ENCODE measurements at regions of chrX and their contacts with region 1.

Region 1: DNA sequence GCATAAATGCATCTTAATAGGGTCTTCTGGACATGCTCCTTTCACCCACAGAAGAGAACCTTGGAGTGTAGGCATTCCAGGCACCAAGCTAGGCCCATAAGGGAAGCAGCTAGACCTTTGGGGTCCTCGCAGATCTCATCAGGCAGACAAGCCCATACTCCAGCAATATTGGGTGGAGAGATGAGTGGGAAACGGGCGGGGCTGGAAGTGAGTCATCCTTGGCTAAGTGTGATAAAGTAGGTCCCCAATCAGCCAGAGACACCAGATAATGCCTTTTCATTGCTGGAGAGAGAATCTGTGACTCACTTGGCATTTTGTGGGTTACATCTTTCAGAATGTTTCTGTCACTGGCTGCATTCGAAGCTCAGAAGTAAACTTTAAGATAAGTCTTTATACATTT is 133.3 kb upstream of the MBNL3 start:
- DNase-seq: peak; percentile 9
- H3K4me3 Mint-ChIP-seq: no peak overlapping the region
- H3K27ac Mint-ChIP-seq: peak overlapping the region; percentile 82
- H3K4me1 Mint-ChIP-seq: peaks cover 12% of the 10 kb centered on the region
- H3K27me3 Mint-ChIP-seq: no peaks in the 10 kb centered on the region

Region 2: DNA sequence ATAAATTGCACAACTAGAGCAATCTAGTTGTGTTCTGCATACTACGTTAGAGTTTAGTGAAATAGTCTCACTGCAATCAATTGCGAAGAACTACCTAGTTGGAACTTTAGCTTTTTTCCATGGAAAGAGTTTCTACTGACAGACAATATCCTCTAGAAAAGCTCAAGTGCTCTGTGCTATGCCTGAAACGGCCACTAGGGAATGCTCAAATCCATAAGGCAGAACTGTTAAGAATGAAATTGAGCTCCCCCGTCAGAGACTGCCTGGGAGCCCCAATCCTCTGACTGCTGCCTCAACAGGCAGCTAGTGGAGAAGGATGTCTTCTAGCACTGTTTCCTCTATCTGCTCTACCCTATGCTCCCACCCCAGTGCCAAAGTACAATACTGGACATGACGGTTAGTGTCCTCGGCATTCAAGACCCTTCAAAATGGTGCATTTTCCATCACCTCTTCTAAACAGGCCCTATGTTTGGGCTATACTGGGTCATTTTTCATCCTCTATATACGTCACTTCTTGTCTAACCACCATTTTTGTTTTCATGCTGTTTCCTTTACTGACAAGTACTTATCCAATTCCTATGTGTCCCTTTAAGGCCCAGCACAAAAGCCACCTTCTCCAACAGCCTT is 529.6 kb before region 1 on chrX:
- intact Hi-C with region 1: loop called (anchors 10 kb)
- DNase-seq: peak; percentile 14
- H3K4me3 Mint-ChIP-seq: no peak overlapping the region
- H3K27ac Mint-ChIP-seq: no peak overlapping the region
- H3K4me1 Mint-ChIP-seq: peaks cover 11% of the 10 kb centered on the region
- H3K27me3 Mint-ChIP-seq: no peaks in the 10 kb centered on the region

Region 3: DNA sequence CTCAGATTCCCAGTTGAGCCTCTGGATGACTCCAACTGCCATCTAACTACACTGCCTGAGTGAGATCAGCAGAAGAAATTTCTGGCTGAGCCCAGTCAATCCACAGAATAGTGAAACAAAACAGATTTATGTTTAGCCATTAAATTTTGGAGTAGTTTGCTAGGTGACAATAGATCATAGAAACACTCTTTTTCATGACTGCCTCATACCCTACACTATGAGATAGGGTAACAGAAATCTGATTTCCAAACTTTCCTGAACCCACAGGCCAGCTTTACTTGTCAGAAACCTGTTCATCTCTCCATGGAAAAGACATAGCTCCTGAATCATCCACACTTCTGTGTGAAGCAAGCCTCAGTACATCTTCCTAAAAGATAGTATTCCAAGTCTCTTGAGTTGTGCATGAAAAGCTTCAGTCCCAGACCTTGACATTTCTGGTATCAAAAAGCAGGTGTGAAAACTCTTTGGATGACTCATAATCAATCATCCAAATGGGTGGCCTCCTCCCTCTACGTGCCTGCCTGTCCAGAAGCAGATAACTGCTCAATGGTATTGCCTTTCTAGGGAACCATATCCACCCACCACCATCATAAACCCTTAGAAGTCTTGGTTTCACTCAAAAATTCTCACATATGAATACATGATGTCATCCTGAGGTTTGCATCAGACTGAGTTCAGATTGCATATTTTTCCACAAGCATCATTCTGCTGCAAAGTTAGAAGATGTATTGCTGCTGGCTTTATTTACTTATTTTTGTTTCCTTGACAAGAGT is 355.4 kb before region 1 on chrX:
- intact Hi-C with region 1: loop called (anchors 1 kb)
- DNase-seq: no peak
- H3K4me3 Mint-ChIP-seq: no peak overlapping the region
- H3K27ac Mint-ChIP-seq: no peak overlapping the region
- H3K4me1 Mint-ChIP-seq: peaks cover 18% of the 10 kb centered on the region
- H3K27me3 Mint-ChIP-seq: no peaks in the 10 kb centered on the region

Region 4: DNA sequence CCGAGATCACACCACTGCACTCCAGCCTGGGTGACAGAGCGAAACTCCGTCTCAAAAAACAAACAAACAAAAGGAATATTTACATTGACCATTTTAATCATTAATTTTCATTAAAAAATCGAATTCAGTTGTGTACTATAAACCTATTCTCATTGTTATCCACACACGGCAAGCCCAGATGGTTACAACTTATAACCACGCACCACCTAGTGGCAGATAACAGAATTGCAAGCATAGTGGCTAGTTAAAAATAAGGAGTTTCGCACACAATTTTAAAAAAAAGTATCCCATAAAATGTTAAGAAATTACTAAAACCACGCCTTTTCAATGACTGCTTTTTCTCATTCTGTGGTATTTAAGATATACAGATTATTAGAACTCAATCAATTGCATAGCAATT is 158.7 kb before region 1 on chrX:
- intact Hi-C with region 1: no loop called
- DNase-seq: no peak
- H3K4me3 Mint-ChIP-seq: no peak overlapping the region
- H3K27ac Mint-ChIP-seq: no peak overlapping the region
- H3K4me1 Mint-ChIP-seq: no peaks in the 10 kb centered on the region
- H3K27me3 Mint-ChIP-seq: no peaks in the 10 kb centered on the region

Region 5: DNA sequence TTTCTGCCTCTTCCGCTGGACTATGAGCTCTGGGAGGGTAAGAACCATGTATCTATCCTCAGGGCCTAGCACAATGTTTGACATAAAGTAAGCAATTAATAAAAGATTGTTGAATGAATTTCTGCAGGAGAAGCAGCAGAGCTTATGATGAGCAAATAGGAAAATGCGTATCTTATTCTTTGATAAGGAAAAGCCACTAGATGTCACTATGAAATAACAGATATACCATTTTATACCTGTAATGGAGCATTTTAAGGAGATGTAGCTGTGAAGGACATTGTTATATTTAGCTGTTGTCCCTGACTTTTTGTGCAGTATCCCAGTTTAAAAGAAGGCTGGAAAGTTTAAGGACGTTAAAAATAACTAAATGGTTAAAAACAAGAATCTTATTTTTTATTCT is 13.9 kb after region 1 on chrX:
- intact Hi-C with region 1: no loop called
- DNase-seq: no peak
- H3K4me3 Mint-ChIP-seq: no peak overlapping the region
- H3K27ac Mint-ChIP-seq: no peak overlapping the region
- H3K4me1 Mint-ChIP-seq: no peaks in the 10 kb centered on the region
- H3K27me3 Mint-ChIP-seq: peaks cover 9% of the 10 kb centered on the region